ENCODE measurements at regions of chr22 and their contacts with region 1.

Region 1: DNA sequence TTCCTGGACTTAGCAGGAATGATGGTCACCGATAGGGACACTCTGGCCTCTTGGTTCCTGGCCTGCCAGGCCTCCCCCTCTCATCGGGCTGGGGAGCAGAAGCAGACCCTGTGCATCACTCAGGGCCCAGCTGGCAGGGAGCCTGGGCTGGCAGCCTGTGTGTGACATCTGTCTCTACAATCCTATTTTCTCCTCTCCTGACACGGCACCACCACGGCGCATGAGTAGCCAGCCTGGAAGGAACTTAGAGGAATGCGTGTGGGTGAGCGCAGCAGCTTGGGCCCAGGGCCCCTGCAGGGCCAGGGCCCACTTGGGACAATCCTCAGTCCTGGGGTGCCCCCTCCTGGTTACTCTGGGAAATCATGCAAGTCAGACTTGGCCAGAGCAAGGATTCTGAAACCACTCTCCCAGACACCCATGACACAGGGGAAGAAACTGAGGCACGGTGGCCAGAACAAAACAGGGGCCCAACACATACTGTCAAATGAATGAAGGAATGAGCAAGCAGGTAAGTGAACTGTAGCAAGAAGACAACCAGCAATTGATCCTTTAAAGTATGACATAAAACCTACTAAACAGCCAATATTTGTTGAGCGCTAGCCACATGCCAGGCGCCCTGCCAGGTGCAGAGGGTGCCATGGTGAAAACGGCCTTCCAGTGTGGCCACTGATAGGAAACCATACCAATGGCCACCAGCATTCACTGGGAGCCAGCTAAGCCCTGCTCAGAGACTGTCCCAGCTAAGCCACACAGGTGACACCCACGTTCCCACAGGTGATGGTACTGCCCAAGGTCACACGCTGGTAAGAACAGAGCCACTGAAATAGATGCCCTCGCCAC is 13.3 kb downstream of the RSPH14 start:
- DNase-seq: peak; percentile 47
- H3K4me3 ChIP-seq: no peak overlapping the region
- H3K27ac ChIP-seq: no peak overlapping the region
- H3K4me1 ChIP-seq: no peaks in the 10 kb centered on the region
- H3K27me3 ChIP-seq: no peaks in the 10 kb centered on the region
- CTCF ChIP-seq: peak; percentile 50 to 79

Region 2: GRCh38 chr22:22587577-22588188 is 540.8 kb before region 1 on chr22:
- CTCF ChIA-PET with region 1: no interaction called
- dilution Hi-C with region 1: no loop called
- in situ Hi-C with region 1: no loop called
- intact Hi-C with region 1: loop called (anchors 10 kb)
- DNase-seq: no peak
- H3K4me3 ChIP-seq: no peak overlapping the region
- H3K27ac ChIP-seq: no peak overlapping the region
- H3K4me1 ChIP-seq: no peaks in the 10 kb centered on the region
- H3K27me3 ChIP-seq: no peaks in the 10 kb centered on the region
- CTCF ChIP-seq: no peak

Region 3: GRCh38 chr22:22770280-22770871 is 358.1 kb before region 1 on chr22:
- CTCF ChIA-PET with region 1: no interaction called
- dilution Hi-C with region 1: no loop called
- in situ Hi-C with region 1: no loop called
- intact Hi-C with region 1: loop called (anchors 10 kb)
- DNase-seq: peak; percentile 10
- H3K4me3 ChIP-seq: no peak overlapping the region
- H3K27ac ChIP-seq: no peak overlapping the region
- H3K4me1 ChIP-seq: no peaks in the 10 kb centered on the region
- H3K27me3 ChIP-seq: no peaks in the 10 kb centered on the region
- CTCF ChIP-seq: peak; percentile 68 to 85

Region 4: DNA sequence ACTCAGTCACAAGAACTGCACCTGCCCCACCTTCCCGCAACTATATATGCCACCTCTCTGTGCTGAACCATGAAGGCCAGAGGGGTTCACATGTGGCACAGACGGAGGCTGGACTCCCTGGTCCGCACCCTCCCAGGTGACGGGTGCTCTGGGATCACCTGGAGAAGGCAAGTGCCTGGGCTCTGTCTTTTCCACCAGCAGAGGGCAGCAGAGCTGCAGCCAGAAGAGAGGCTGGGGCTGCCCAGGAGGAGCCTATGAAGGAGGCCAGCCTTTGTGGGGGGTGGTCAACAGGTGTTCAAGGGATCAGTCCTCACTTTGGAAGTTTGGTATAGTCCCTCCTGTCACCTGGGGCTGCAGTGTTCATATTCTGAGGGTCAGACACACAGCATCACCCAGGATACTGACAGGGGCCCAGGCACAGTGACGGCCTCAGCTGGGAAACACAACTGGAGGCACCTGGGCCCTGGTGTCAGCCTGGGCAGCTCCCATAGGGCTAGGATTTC is 280.1 kb before region 1 on chr22:
- CTCF ChIA-PET with region 1: no interaction called
- dilution Hi-C with region 1: no loop called
- in situ Hi-C with region 1: no loop called
- intact Hi-C with region 1: loop called (anchors 1 kb)
- DNase-seq: peak; percentile 28
- H3K4me3 ChIP-seq: no peak overlapping the region
- H3K27ac ChIP-seq: no peak overlapping the region
- H3K4me1 ChIP-seq: no peaks in the 10 kb centered on the region
- H3K27me3 ChIP-seq: no peaks in the 10 kb centered on the region
- CTCF ChIP-seq: peak; percentile 97 to 98

Region 5: DNA sequence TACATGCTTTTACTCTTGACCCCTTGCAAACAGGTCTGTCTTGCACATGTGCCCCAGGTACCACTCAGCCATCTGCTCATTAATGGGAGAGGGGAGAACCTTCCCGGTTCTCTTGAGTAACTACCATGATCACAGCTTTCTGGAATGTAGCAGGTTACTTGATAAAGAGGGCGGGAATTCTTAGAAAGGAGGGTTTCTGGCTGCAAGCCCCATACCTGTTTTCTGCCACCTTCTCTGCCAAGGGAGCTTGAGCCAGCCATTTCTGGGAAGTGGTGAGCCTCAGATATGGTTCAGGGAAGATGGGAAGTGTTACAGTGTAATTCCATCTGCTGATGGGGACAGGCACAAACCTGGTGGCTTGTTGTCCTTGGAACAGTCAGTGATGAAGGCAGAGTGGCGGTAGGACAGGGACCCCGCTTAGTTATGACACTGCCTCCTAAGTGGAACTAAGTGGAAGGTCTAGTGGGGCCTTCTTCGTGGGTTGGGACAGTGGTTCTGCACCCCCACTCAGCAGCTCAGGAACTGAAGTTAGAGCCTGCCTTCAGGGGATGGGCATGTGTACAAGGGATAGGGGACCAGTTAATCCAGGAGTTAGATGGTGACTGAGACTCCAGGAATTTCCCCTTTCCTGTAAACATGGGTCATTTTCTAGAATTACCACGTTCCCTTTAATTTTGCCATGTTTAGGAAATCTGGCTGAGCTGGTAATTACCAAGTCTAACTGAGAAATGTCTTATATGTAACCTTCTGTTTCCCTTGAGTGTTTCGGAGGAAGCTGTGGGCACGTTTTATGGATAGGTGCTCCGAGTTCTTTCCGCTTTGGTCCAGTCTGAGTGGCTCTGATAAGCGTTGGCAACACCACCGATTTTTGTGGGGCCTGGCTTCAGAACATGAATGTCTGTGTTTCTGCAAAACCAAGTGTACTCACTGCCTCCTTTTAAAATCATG is 87.1 kb after region 1 on chr22:
- CTCF ChIA-PET with region 1: no interaction called
- dilution Hi-C with region 1: no loop called
- in situ Hi-C with region 1: no loop called
- intact Hi-C with region 1: no loop called
- DNase-seq: peak; percentile 14
- H3K4me3 ChIP-seq: no peak overlapping the region
- H3K27ac ChIP-seq: no peak overlapping the region
- H3K4me1 ChIP-seq: peaks cover 34% of the 10 kb centered on the region
- H3K27me3 ChIP-seq: no peaks in the 10 kb centered on the region
- CTCF ChIP-seq: no peak

Region 6: DNA sequence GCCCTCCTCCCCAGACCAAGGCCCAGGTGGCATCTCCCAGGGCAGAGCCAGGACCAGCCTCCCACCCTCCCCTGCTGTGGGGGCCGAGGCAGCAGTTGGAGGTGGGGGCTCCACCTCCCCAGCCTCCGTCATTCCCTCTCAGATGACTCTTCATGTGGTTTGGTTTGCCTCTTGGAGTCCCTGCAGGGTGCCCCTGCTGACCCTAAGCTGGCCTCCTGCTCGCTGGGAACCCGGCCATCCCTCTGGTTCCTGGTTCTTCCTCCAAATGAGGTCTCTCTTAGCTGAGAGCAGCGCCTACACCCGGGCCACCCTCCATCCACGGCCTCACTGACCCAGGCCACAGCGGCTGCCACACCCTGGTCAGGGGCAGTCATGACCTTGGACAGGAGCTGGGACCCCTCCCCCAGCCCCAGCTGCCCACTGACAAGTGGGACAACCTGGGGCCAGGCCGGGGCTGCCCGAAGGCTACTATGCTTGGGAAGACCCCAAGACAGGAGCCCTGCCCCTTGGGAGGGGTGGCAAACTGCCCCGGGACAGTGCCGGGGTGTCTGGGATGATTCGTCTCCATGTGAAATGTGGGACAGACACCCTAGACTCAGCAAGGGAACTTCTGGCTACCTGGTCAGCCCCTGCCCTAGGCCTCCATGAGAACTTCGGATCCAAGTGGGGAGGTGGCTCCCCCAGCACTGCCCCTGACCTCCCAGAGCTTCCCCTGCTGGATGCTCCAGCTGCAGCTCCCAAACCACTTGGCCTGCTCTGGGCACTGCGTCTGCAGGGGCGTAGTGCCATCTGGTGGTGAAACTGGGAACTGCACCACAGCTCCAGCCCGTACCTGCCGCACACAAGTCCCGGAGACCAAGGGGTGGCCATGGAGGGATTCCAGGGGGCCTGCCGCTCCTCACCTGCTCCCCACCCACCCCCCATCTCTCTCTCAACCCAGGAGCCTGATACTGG is 257.1 kb after region 1 on chr22:
- CTCF ChIA-PET with region 1: no interaction called
- dilution Hi-C with region 1: no loop called
- in situ Hi-C with region 1: no loop called
- intact Hi-C with region 1: loop called (anchors 5 kb)
- DNase-seq: peak; percentile 49
- H3K4me3 ChIP-seq: no peak overlapping the region
- H3K27ac ChIP-seq: no peak overlapping the region
- H3K4me1 ChIP-seq: no peaks in the 10 kb centered on the region
- H3K27me3 ChIP-seq: no peaks in the 10 kb centered on the region
- CTCF ChIP-seq: peak; percentile 96 to 98